Posterior vena cava (tissue), 2 donors: ENCODE measurements at regions of chr7 and their contacts with region 1.

Region 1: GRCh38 chr7:95527033-95527775 is 41.5 kb downstream of the ASB4 start:
- DNase-seq: no peak

Region 2: DNA sequence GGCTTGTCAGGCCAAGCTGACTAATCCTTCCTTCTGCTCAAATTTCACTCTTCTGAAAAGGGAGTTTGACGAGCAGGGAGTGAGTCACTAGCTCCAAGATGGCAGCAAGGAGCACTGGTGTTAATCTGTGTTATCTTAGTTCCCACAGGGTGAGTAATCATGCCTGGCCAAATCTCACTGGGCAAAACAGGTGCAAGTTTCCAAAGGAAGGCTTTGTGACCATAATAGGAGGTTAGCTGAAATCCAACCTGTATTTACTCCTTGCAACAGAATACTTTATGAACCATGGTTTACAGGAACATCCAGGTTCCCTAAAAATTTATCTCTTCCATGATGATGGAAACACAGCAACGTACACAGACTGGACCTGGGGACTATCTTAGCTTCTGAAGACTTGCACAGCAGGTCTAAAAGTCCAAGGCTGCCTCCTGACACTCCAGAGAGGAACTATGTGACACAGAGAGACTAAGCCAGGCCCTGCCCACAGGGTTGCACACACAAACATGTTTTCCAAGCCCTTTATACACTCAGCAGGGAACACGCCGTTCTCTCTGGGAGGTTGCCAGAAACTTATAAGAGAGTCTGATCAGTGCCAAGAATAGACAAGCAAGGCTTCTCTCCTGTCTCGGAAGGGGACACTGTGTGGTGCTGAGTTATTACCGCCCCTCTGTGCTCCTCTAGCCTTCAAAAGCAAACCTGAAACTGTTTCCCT is 22.8 kb after region 1 on chr7:
- intact Hi-C with region 1: no loop called
- DNase-seq: peak; percentile 92

Region 3: GRCh38 chr7:95596198-95597063 is 69.2 kb after region 1 on chr7 and contains the start of gene PDK4:
- intact Hi-C with region 1: loop called in 1 of 2 experiments (anchors 5 kb)
- DNase-seq: peak; percentile 96
- total RNA-seq, gene PDK4: 66.4 to 433 TPM